AG04449 (cell line): ENCODE measurements at regions of chr1 and their contacts with region 1.

Region 1: DNA sequence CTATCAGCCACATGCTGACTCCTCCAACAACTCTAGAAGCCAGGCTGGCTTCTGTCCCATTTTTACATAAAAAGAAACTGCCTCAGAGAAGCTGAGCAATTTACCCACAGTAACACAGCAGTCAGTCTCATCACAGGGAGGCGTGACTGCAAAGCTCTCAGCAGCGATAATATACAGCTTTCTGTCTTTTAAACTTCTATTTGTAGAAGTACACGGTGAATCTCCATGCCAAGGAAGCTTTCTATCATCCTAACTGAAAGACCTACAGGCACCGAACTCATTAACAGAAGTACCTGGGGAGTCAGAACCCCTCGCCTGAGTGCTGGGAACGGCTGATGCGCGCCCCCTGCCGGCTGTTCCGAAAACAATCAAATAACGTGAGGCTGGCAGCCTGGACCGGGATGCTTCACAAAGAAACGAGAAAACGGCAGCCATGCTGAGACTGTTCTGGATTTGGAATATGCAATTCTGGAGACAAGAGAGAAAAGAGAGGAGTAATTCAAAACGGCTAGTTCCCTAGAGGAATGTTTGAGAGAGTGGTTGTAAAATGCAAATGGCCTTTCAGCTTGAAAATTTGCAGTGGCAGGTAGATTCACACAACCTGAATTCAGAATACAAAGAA is 43.5 kb upstream of the RAB4A start:
- DNase-seq: no peak
- H3K4me3 ChIP-seq: no peak overlapping the region
- CTCF ChIP-seq: peak; percentile 80

Region 2: DNA sequence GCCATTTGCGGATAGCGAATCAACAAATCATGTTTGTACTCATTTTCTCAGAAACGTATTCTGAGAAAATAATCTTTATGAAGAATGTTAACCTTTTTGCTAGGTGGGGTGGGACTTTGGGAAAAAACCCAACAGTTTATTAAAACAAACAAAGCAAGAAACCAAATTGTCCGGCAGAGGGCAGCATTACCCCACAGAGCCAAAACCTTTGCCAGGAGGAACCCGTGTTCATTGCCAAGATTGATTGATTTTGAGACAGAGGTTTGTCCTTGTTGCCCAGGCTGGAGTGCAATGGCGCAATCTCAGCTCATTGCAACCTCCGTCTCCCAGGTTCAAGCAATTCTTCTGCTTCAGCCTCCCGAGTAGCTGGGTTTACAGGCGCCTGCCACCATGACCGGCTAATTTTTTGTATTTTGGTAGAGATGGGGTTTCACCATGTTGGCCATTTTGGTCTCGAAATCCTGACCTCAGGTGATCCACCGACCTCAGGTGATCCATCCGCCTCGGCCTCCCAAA is 563.0 kb before region 1 on chr1:
- CTCF ChIA-PET with region 1: interaction called, 144 read pairs
- POLR2A ChIA-PET with region 1: no interaction called
- DNase-seq: no peak
- H3K4me3 ChIP-seq: no peak overlapping the region
- CTCF ChIP-seq: peak; percentile 67

Region 3: GRCh38 chr1:228734881-228735801 is 492.3 kb before region 1 on chr1 and contains the start of gene RHOU:
- CTCF ChIA-PET with region 1: interaction called, 66 read pairs
- POLR2A ChIA-PET with region 1: no interaction called
- DNase-seq: no peak
- H3K4me3 ChIP-seq: peak within 1 kb of the TSS; percentile 59
- CTCF ChIP-seq: peak; percentile 34

Region 4: DNA sequence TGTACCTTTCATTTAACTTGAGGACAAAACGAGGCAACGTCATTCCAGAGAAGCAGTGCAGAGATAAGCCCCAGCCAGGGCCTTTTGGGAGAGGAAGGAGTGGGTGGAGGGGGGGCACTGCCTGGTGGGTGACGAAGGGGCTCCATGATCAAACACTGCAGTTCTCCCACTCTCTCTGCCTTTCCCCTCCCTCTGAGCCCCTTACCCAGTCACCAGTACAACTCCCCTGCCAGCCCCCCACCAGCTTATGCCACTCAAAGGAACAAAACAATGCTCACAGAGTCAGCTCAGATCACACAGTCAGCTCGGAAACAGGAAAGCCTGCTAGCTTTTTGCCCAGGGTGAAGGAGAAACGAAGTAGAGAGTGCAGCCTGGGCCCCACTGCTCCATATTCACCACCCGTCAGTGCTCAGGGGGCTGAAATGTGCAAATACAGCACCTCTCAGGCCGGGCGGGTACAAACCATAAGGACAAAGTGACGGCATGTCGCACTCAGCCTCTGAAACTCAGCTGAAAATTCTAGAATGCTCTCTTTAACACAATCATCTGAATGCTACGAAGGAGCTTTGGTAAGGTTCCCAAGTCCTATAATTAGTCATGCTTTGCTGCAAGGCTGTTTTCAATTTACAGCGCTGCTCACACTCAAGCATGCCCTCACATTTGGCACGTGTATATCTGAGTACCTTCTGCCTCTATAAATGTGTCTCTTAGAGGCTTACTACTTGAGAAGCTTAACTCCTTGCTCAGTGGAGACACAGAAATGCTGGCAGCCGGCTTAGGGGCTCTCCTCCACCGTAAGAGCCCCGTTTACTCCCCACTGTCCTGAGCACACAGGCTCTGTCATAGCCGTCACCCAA is 22.3 kb before region 1 on chr1:
- CTCF ChIA-PET with region 1: interaction called, 75 read pairs
- POLR2A ChIA-PET with region 1: no interaction called
- DNase-seq: peak; percentile 74
- H3K4me3 ChIP-seq: no peak overlapping the region
- CTCF ChIP-seq: no peak

Region 5: GRCh38 chr1:229244091-229244490 is 16.7 kb after region 1 on chr1:
- CTCF ChIA-PET with region 1: interaction called, 27 read pairs
- POLR2A ChIA-PET with region 1: no interaction called
- DNase-seq: no peak
- H3K4me3 ChIP-seq: no peak overlapping the region
- CTCF ChIP-seq: no peak